Activated CD8-positive, alpha-beta T cell treated with anti-CD3 and anti-CD28 coated beads, Interleukin-2, amount 10 ng/mL, durations not matched to agents 7 days and 5 days (primary cell): ENCODE measurements at regions of chr10 and their contacts with region 1.

Region 1: GRCh38 chr10:102225646-102226541 is at the start of gene ELOVL3:
- DNase-seq: peak; percentile 91
- ATAC-seq: peak; percentile 96
- H3K4me3 Mint-ChIP-seq: peak within 1 kb of the TSS; percentile 32
- H3K27ac Mint-ChIP-seq: no peak within 1 kb of the TSS
- H3K4me1 Mint-ChIP-seq: peaks cover 24% of the 10 kb centered on the region
- H3K27me3 Mint-ChIP-seq: peaks cover 56% of the 10 kb centered on the region
- total RNA-seq, gene ELOVL3: not detected

Region 2: DNA sequence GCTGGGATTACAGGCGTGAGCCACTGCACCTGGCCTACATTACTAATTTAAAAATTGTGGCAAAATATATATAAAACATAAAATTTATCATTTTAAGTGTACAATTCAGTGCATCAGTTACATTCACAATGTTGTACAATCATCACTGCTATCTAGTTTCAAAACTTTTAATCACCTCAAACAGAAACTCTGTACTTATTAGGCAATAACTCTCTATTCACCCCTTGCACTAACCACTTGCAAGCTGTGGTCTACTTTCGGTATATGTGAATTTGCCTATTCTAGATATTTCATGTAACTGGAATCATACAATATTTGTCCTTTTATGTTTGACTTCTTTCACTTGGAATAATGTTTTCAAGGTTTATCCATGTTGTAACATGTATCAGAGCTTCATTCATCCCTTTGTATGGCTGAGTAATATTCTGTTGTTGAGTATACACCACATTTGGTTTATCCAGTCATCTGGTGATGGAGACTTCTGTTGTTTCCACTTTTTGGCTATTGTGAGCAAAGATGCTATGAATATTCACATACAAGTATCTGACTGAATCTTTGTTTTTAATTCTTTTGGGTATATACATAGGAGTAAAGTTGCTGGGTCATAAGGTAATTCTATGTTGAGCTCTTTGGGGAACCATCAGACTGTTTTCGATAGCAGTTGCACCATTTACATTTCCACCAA is 14.1 kb before region 1 on chr10:
- CTCF ChIA-PET with region 1: interaction called, 10 read pairs
- POLR2A ChIA-PET with region 1: no interaction called
- DNase-seq: no peak
- ATAC-seq: no peak
- H3K4me3 Mint-ChIP-seq: no peak overlapping the region
- H3K27ac Mint-ChIP-seq: no peak overlapping the region
- H3K4me1 Mint-ChIP-seq: no peaks in the 10 kb centered on the region
- H3K27me3 Mint-ChIP-seq: peaks cover 11% of the 10 kb centered on the region

Region 3: GRCh38 chr10:102322914-102323313 is 97.0 kb after region 1 on chr10:
- CTCF ChIA-PET with region 1: interaction called, 21 read pairs
- POLR2A ChIA-PET with region 1: no interaction called
- DNase-seq: peak; percentile 75
- ATAC-seq: peak; percentile 89
- H3K4me3 Mint-ChIP-seq: no peak overlapping the region
- H3K27ac Mint-ChIP-seq: no peak overlapping the region
- H3K4me1 Mint-ChIP-seq: peaks cover 17% of the 10 kb centered on the region
- H3K27me3 Mint-ChIP-seq: no peaks in the 10 kb centered on the region

Region 4: GRCh38 chr10:102368072-102368471 is 142.2 kb after region 1 on chr10:
- CTCF ChIA-PET with region 1: interaction called, 42 read pairs
- POLR2A ChIA-PET with region 1: no interaction called
- DNase-seq: no peak
- ATAC-seq: no peak
- H3K4me3 Mint-ChIP-seq: no peak overlapping the region
- H3K27ac Mint-ChIP-seq: no peak overlapping the region
- H3K4me1 Mint-ChIP-seq: no peaks in the 10 kb centered on the region
- H3K27me3 Mint-ChIP-seq: no peaks in the 10 kb centered on the region

Region 5: DNA sequence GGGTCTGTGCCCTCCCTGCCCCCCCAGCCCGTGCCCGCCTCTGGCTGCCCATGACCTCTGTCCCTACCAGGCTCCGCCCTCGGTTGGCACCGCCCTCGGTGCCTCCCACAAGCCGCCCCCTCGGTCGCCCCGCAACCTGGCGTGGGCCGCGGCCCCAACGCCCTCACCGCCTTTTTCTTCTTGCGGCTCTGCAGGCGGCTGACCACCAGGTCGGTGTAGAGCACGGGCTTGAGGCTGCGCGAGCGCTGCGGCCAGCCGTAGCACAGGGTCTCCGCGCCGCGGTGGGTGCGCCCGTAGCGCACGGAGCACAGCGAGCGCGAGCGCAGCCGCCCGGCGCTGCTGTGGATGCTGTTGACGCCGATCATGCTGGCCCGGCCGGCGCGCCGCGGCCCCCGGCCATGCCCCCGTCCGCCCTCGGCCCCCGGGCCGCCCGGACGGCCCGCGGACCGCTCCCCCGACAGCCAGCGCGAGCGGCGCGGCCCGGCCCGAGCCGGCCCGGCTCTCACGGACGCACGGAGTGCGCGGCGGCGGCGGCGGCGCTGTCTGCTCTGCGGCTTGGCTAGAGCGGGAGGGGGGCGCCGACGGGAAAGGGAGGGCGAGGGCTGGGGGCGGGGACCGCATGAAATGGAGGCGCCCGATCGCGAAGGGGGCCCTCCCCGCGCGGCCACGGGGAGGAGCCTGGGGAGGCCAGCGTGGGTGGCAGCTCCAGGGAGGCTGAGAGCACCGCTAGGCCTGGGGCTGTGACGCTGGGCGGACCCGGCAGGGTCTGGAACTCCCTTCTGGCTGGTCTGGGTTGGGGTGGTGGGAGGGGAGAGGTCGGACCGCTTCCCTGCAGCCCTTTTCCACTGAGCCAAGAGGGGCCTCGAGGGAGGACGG is 183.1 kb after region 1 on chr10:
- CTCF ChIA-PET with region 1: interaction called, 30 read pairs
- POLR2A ChIA-PET with region 1: no interaction called
- DNase-seq: peak; percentile 62
- ATAC-seq: peak; percentile 50
- H3K4me3 Mint-ChIP-seq: peak overlapping the region; percentile 34
- H3K27ac Mint-ChIP-seq: no peak overlapping the region
- H3K4me1 Mint-ChIP-seq: peaks cover 32% of the 10 kb centered on the region
- H3K27me3 Mint-ChIP-seq: peaks cover 22% of the 10 kb centered on the region

Region 6: DNA sequence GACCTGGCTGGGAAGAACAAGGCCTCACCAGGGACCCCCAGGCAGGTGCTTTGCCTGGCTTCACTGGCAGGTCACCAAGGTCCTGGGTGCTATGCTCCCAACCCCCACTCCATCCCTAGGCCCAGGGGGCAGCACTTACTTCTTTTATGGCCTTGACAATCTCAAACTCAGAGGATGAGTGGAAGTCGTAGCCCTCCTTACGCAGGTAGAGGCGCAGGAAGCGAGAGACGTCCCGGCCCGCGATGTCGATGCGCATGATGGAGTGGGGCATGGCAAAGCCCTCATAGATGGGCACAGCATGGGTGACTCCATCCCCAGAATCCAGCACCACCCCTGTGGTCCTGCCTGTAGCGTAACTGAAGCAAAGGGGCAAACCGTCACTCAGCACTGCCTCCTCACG is 258.1 kb after region 1 on chr10:
- CTCF ChIA-PET with region 1: interaction called, 30 read pairs
- POLR2A ChIA-PET with region 1: no interaction called
- DNase-seq: no peak
- ATAC-seq: no peak
- H3K4me3 Mint-ChIP-seq: no peak overlapping the region
- H3K27ac Mint-ChIP-seq: no peak overlapping the region
- H3K4me1 Mint-ChIP-seq: peaks cover 2% of the 10 kb centered on the region
- H3K27me3 Mint-ChIP-seq: no peaks in the 10 kb centered on the region